Body of pancreas (tissue), 4 donors: ENCODE measurements at regions of chr1 and their contacts with region 1.

Region 1: GRCh38 chr1:99707535-99708142 is 58.8 kb downstream of the FRRS1 start:
- DNase-seq: peak; percentile 65 to 77 (median 72)
- ATAC-seq: peak; percentile 76
- H3K4me3 ChIP-seq: no peak overlapping the region
- H3K27ac ChIP-seq: no peak overlapping the region
- H3K4me1 ChIP-seq: no peaks in the 10 kb centered on the region
- H3K27me3 ChIP-seq: no peaks in the 10 kb centered on the region
- CTCF ChIP-seq: peak; percentile 48 to 79 (median 74)
- POLR2A ChIP-seq: no peak

Region 2: DNA sequence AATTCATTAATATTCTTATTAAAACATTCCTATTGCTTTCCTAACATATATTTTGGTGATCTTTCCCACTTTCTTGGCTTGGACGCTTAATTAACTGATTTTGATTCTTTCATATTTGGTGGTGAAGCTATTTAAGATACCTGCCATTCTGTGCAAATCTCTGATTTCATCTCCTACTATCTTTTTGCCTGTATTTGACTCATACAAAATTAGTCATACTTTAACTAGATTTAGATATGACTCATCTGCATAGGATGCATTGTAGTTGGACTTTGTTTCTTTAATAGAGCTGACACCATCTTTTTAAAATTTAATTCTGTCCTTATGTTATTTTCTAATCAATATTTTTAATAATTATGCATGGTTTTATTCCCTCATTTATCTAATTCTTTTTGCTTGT is 537.1 kb before region 1 on chr1:
- intact Hi-C with region 1: loop called (anchors 10 kb)
- DNase-seq: no peak
- ATAC-seq: no peak
- H3K4me3 ChIP-seq: no peak overlapping the region
- H3K27ac ChIP-seq: no peak overlapping the region
- H3K4me1 ChIP-seq: no peaks in the 10 kb centered on the region
- H3K27me3 ChIP-seq: no peaks in the 10 kb centered on the region
- CTCF ChIP-seq: no peak
- POLR2A ChIP-seq: no peak

Region 3: DNA sequence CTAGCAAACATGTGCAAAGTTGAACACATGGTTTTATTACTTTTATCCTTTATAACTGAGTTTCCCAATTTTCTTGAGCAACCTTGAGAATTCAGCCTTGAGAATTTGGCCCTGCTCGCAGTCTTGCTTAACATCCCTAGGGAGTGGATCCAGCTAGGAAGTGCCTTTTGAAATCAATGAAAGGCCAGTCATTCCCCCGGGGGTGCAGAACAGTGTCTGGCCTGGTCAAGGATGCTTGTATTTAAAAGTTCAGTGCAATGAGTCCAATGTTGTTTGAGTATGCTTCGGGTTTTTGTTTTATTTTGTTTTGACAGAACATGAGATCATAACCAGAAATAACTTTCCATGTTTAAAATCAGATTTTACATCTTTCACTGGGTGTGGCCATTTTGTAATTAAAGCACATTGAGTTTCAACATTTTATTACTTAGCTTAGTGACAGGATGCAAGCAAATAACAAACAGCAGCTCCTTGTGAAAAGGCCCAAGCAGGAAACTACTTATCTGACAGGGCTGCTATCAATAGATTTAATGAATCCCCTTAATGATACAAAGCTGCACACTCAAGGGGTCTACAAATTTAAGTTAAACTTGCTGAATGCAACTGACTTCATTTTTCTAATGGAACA is 44.9 kb before region 1 on chr1:
- intact Hi-C with region 1: no loop called
- DNase-seq: peak; percentile 19 to 62 (median 46)
- ATAC-seq: peak; percentile 73
- H3K4me3 ChIP-seq: no peak overlapping the region
- H3K27ac ChIP-seq: peak overlapping the region in 2 of 4 donors; percentile 35 to 37
- H3K4me1 ChIP-seq: no peaks in the 10 kb centered on the region
- H3K27me3 ChIP-seq: no peaks in the 10 kb centered on the region
- CTCF ChIP-seq: no peak
- POLR2A ChIP-seq: no peak